GM12878 (cell line): ENCODE measurements at regions of chr5 and their contacts with region 1.

Region 1: DNA sequence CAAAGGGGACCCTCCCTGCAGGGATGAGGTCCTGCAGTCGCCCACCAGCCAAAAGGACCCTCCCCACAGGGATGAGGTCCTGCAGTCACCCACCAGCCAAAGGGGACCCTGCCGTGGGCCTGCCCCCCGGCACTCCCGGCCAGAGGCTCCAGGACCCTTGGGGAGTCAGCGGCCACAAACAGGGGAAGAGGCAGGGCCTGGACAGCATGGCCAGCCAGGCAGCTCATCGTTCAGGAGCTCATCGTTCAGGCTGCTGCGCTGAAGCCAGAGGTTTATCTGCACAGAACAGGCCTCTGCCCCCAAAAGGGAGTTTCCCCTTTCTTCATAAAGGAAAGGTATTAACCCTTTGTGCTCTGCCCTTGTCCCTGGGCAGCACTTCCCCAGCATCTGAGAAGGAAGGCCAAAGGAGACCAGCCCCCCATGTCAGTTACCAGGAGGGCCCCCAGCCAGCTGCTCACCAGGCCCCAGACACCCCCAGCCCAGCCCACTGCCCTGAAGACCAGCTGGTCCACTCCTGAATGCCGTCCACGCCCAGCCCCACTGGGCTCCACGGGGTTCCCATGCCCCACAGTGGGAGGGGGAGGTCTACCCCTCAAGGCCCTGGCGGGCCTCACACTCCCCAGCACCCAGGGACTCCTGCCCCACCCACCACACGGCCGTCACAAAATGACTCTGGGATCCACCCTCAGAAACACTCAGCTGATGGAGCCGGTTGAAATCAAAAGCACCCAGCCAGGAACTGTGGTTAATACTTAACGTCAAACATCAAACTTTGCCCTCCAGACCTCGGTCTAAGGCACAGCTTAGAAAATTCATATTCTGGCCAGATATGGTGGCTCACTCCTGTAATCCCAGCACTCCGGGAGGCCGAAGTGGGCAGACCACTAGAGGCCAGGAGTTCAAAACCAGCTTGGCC is 6.3 kb downstream of the SLC12A7 start:
- DNase-seq: no peak
- ATAC-seq: peak; percentile 76
- H3K4me3 ChIP-seq: no peak overlapping the region
- H3K27ac ChIP-seq: no peak overlapping the region
- H3K4me1 ChIP-seq: no peaks in the 10 kb centered on the region
- H3K27me3 ChIP-seq: no peaks in the 10 kb centered on the region; a peak in 1 of 4 replicates
- CTCF ChIP-seq: no peak
- EP300 ChIP-seq: no peak
- POLR2A ChIP-seq: no peak
- RAD21 ChIP-seq: no peak

Region 2: DNA sequence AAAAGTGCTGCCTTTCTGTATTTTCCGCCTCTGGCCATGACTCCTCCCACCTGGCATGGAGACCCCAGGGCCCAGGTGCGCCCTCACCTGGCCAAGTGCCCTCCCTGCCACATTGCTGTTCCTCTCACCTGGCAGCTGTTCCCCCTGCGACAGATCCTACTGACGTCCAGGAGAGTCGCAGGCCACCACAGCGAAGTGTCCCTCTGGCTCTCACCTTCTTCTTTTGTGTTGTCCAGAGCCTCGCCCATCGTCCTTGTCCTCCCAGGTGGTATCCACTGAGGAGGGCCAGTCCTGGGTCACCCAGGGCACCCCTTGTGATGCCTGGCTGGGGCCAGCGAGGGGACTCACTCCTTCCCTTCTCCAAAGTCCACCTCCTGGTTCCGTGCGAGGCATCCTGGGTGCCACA is 94.4 kb before region 1 on chr5:
- CTCF ChIA-PET with region 1: no interaction called
- POLR2A ChIA-PET with region 1: no interaction called
- RAD21 ChIA-PET with region 1: no interaction called
- SMC1A ChIA-PET with region 1: no interaction called
- in situ Hi-C with region 1: loop called (anchors 5 kb)
- intact Hi-C with region 1: no loop called
- DNase-seq: no peak
- ATAC-seq: peak; percentile 70
- H3K4me3 ChIP-seq: no peak overlapping the region
- H3K27ac ChIP-seq: no peak overlapping the region
- H3K4me1 ChIP-seq: no peaks in the 10 kb centered on the region
- H3K27me3 ChIP-seq: peaks cover 2 to 3% of the 10 kb centered on the region in 2 experiments; a peak in 3 of 4 replicates
- CTCF ChIP-seq: peak; percentile 49 to 55 (median 53)
- EP300 ChIP-seq: no peak
- POLR2A ChIP-seq: no peak
- RAD21 ChIP-seq: peak; percentile 29

Region 3: GRCh38 chr5:1134478-1134877 is 28.9 kb after region 1 on chr5:
- CTCF ChIA-PET with region 1: interaction called, 13 read pairs
- POLR2A ChIA-PET with region 1: interaction called, 32 read pairs
- RAD21 ChIA-PET with region 1: interaction called, 78 read pairs
- SMC1A ChIA-PET with region 1: interaction called, 16 read pairs
- in situ Hi-C with region 1: no loop called
- intact Hi-C with region 1: no loop called
- DNase-seq: peak; percentile 74
- ATAC-seq: peak; percentile 88
- H3K4me3 ChIP-seq: no peak overlapping the region; the same call in 1 of the 2 replicates
- H3K27ac ChIP-seq: peak overlapping the region; percentile 60
- H3K4me1 ChIP-seq: peaks cover 21% of the 10 kb centered on the region
- H3K27me3 ChIP-seq: no peaks in the 10 kb centered on the region
- CTCF ChIP-seq: peak; percentile 48 to 60 (median 56); a peak in 5 of 6 replicates
- EP300 ChIP-seq: no peak
- POLR2A ChIP-seq: no peak
- RAD21 ChIP-seq: peak; percentile 51